HepG2 (cell line): ENCODE measurements at regions of chr15 and their contacts with region 1.

Region 1: GRCh38 chr15:94375997-94376396 is 144.6 kb downstream of the MCTP2 start:
- DNase-seq: no peak
- ATAC-seq: no peak
- H3K4me3 ChIP-seq: no peak overlapping the region
- H3K27ac ChIP-seq: no peak overlapping the region
- H3K4me1 ChIP-seq: no peaks in the 10 kb centered on the region
- H3K27me3 ChIP-seq: no peaks in the 10 kb centered on the region
- CTCF ChIP-seq: no peak
- EP300 ChIP-seq: no peak
- POLR2A ChIP-seq: no peak
- RAD21 ChIP-seq: no peak

Region 2: GRCh38 chr15:94829887-94830884 is 454.2 kb after region 1 on chr15:
- CTCF ChIA-PET with region 1: no interaction called
- POLR2A ChIA-PET with region 1: no interaction called
- in situ Hi-C with region 1: no loop called
- intact Hi-C with region 1: loop called (anchors 10 kb)
- DNase-seq: no peak
- ATAC-seq: no peak
- H3K4me3 ChIP-seq: no peak overlapping the region
- H3K27ac ChIP-seq: no peak overlapping the region
- H3K4me1 ChIP-seq: no peaks in the 10 kb centered on the region
- H3K27me3 ChIP-seq: no peaks in the 10 kb centered on the region
- CTCF ChIP-seq: no peak
- EP300 ChIP-seq: no peak
- POLR2A ChIP-seq: no peak
- RAD21 ChIP-seq: no peak